Activated CD8-positive, alpha-beta memory T cell treated with anti-CD3 and anti-CD28 coated beads, Interleukin-2, amount 10 ng/mL, durations not matched to agents 7 days and 5 days (primary cell): ENCODE measurements at regions of chr7 and their contacts with region 1.

Region 1: DNA sequence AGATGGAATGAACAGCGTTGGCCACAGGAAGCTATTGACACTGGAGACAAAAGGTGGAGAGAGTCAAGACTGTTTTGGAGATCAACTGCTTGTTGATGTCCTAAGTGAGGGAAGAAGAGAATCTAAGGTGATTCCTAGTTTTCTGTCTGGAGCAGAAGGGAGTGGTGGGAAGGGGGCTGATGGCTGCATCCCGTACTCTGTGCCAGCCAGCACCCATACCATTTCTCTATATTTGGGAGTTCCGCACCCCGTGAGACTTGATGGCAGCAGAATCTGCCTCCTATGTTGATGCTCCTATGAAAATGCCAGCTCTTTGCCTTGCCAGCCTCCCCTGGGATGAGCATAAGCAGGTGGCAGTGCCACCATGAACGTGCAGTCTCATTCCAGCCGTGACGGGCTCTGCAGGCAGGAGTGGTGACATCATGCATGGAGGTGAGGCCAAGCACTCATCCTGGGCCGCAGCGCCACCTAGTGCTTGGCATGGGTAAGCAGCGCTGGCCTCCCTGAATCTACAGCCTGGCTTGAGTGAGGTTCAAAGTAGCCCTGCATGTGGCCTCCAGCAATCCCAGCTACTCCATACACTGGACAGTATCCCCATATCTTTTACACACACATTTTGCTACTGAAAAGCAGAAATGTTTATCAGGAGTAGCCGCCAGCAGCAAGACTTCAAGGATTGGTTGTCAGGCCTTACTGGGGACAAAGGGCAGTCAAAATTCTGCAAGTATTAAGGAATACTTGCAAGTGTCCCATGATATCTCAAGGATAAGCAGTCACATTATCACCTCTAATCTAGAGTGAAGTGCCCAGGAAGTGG is 43.0 kb downstream of the PODXL start:
- DNase-seq: peak; percentile 87
- ATAC-seq: peak; percentile 98
- H3K4me3 Mint-ChIP-seq: no peak overlapping the region
- H3K27ac Mint-ChIP-seq: peak overlapping the region; percentile 5
- H3K4me1 Mint-ChIP-seq: peaks cover 24% of the 10 kb centered on the region
- H3K27me3 Mint-ChIP-seq: peaks cover 6% of the 10 kb centered on the region

Region 2: DNA sequence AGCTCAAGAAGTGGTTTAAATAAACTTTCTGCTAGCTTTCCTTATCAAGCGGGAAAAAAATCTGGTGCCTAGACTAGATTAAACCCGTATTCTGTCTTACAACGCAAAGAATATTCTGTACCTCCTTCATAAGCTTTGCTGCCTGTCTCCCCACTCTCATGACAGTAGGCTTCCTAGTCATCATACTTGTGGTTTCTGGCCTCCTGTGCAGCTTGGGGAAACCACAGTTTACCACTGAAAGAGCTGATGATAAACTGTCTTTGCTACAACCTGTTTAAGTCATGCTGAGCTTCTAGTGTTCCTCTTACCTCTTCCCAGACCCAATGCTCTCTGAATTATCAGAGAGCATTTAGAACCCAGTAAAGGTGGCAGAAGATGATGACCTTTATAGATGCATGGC is 12.0 kb before region 1 on chr7:
- CTCF ChIA-PET with region 1: interaction called, 45 read pairs
- DNase-seq: peak; percentile 88
- ATAC-seq: peak; percentile 97
- H3K4me3 Mint-ChIP-seq: no peak overlapping the region
- H3K27ac Mint-ChIP-seq: peak overlapping the region; percentile 69
- H3K4me1 Mint-ChIP-seq: peaks cover 31% of the 10 kb centered on the region
- H3K27me3 Mint-ChIP-seq: no peaks in the 10 kb centered on the region

Region 3: DNA sequence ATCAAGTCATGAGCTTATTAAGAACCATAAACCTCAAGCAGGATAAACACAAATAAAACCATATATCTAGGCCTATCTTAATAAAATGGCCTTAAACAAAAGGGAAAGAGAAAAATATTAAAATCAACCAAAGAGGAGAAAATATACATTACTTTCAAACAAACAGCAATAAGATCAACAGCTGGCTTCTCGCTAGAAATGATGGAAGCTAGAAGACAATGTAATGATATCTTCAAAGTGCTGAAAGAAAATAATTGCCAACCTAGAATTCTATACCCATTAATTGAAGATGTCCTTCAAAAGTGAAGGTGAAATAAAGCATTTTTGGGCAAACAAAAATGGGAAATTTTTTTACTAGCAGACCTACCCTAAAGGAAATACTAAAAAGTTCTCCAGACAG is 185.9 kb after region 1 on chr7:
- CTCF ChIA-PET with region 1: no interaction called
- DNase-seq: no peak
- ATAC-seq: no peak
- H3K4me3 Mint-ChIP-seq: no peak overlapping the region
- H3K27ac Mint-ChIP-seq: no peak overlapping the region
- H3K4me1 Mint-ChIP-seq: no peaks in the 10 kb centered on the region
- H3K27me3 Mint-ChIP-seq: peaks cover 11% of the 10 kb centered on the region